GM12878 (cell line): ENCODE measurements at regions of chr4 and their contacts with region 1.

Region 1: GRCh38 chr4:86593688-86594558 is at the start of gene PTPN13:
- DNase-seq: peak; percentile 84
- ATAC-seq: peak; percentile 87
- H3K4me3 ChIP-seq: peak within 1 kb of the TSS; percentile 48
- H3K27ac ChIP-seq: no peak within 1 kb of the TSS
- H3K4me1 ChIP-seq: no peaks in the 10 kb centered on the region
- H3K27me3 ChIP-seq: peaks cover 0 to 5% of the 10 kb centered on the region in 2 experiments; a peak in 1 of 4 replicates
- CTCF ChIP-seq: peak in 2 of 3 experiments; percentile 7 to 39; a peak in 1 of 6 replicates
- EP300 ChIP-seq: no peak
- POLR2A ChIP-seq: peak; percentile 79
- RAD21 ChIP-seq: peak; percentile 21; the same call in 1 of the 2 replicates
- polyA plus RNA-seq, gene PTPN13: 8.5 to 9.3 TPM

Region 2: GRCh38 chr4:86557526-86557925 is 36.4 kb before region 1 on chr4:
- CTCF ChIA-PET with region 1: interaction called, 4 read pairs
- POLR2A ChIA-PET with region 1: interaction called, 6 read pairs
- RAD21 ChIA-PET with region 1: interaction called, 11 read pairs
- SMC1A ChIA-PET with region 1: interaction called, 3 read pairs
- in situ Hi-C with region 1: no loop called
- intact Hi-C with region 1: loop called (anchors 1 kb)
- DNase-seq: no peak
- ATAC-seq: peak; percentile 88
- H3K4me3 ChIP-seq: no peak overlapping the region
- H3K27ac ChIP-seq: peak overlapping the region; percentile 69; the same call in 1 of the 2 replicates
- H3K4me1 ChIP-seq: peaks cover 7% of the 10 kb centered on the region; the same call in 1 of the 2 replicates
- H3K27me3 ChIP-seq: no peaks in the 10 kb centered on the region; a peak in 1 of 4 replicates
- CTCF ChIP-seq: no peak
- EP300 ChIP-seq: no peak
- POLR2A ChIP-seq: no peak
- RAD21 ChIP-seq: no peak

Region 3: GRCh38 chr4:86608757-86609375 is 14.9 kb after region 1 on chr4:
- CTCF ChIA-PET with region 1: interaction called, 13 read pairs
- POLR2A ChIA-PET with region 1: interaction called, 30 read pairs
- RAD21 ChIA-PET with region 1: interaction called, 49 read pairs
- SMC1A ChIA-PET with region 1: interaction called, 69 read pairs
- in situ Hi-C with region 1: no loop called
- intact Hi-C with region 1: no loop called
- DNase-seq: no peak
- ATAC-seq: no peak
- H3K4me3 ChIP-seq: no peak overlapping the region
- H3K27ac ChIP-seq: no peak overlapping the region
- H3K4me1 ChIP-seq: no peaks in the 10 kb centered on the region
- H3K27me3 ChIP-seq: 0 out of 4 replicates have a peak, but pooled peaks cover 0 to 2% of the 10 kb centered on the region in 2 experiments
- CTCF ChIP-seq: no peak
- EP300 ChIP-seq: no peak
- POLR2A ChIP-seq: no peak
- RAD21 ChIP-seq: no peak

Region 4: GRCh38 chr4:86626066-86626465 is 32.1 kb after region 1 on chr4:
- CTCF ChIA-PET with region 1: interaction called, 7 read pairs
- POLR2A ChIA-PET with region 1: interaction called, 4 read pairs
- RAD21 ChIA-PET with region 1: interaction called, 16 read pairs
- SMC1A ChIA-PET with region 1: interaction called, 71 read pairs
- in situ Hi-C with region 1: no loop called
- intact Hi-C with region 1: no loop called
- DNase-seq: no peak
- ATAC-seq: no peak
- H3K4me3 ChIP-seq: no peak overlapping the region
- H3K27ac ChIP-seq: no peak overlapping the region
- H3K4me1 ChIP-seq: no peaks in the 10 kb centered on the region
- H3K27me3 ChIP-seq: no peaks in the 10 kb centered on the region
- CTCF ChIP-seq: no peak
- EP300 ChIP-seq: no peak
- POLR2A ChIP-seq: no peak
- RAD21 ChIP-seq: no peak

Region 5: GRCh38 chr4:86640469-86640868 is 46.5 kb after region 1 on chr4:
- CTCF ChIA-PET with region 1: interaction called, 7 read pairs
- POLR2A ChIA-PET with region 1: interaction called, 10 read pairs
- RAD21 ChIA-PET with region 1: interaction called, 47 read pairs
- SMC1A ChIA-PET with region 1: interaction called, 23 read pairs
- in situ Hi-C with region 1: no loop called
- intact Hi-C with region 1: no loop called
- DNase-seq: no peak
- ATAC-seq: peak; percentile 62
- H3K4me3 ChIP-seq: no peak overlapping the region
- H3K27ac ChIP-seq: no peak overlapping the region
- H3K4me1 ChIP-seq: no peaks in the 10 kb centered on the region
- H3K27me3 ChIP-seq: no peaks in the 10 kb centered on the region
- CTCF ChIP-seq: no peak
- EP300 ChIP-seq: no peak
- POLR2A ChIP-seq: no peak
- RAD21 ChIP-seq: no peak

Region 6: DNA sequence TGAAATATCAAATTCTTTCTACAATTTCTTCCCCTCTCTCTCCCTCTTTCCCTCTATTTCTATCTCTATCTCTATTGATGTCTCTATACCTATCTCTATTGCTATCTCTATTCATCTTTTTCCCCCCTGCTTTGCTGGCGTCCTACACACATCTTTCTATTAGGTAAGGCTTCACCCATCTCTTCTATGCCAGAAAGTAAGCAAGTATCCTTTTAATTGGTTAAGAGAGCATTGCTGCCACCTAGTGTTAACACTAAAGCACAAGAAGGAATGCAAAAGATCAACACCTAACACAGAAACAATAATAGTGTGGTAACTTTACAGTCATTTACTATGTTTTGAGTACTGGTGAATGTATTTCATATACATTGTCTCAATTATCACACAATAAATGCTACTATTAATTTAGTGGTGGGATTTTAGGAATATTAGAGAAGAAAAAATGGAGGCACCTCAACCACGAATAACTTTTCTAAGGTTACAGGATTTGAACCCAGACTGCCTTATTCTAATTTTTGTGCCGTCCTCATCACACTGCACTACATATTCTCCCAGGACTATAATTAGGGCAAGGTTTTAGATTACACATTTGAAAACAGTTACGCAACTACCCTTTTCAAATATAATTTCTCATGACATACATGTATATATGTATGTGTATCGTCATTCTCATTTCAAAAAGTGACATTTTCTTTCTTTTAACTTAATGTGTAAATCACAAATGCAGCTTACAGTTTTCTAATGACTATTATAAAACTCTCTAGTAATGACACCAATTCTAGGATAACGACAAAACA is 302.0 kb after region 1 on chr4:
- CTCF ChIA-PET with region 1: interaction called, 8 read pairs
- POLR2A ChIA-PET with region 1: interaction called, 3 read pairs
- RAD21 ChIA-PET with region 1: interaction called, 12 read pairs
- SMC1A ChIA-PET with region 1: interaction called, 3 read pairs
- in situ Hi-C with region 1: no loop called
- intact Hi-C with region 1: loop called (anchors 2 kb)
- DNase-seq: no peak
- ATAC-seq: peak; percentile 65
- H3K4me3 ChIP-seq: no peak overlapping the region
- H3K27ac ChIP-seq: no peak overlapping the region
- H3K4me1 ChIP-seq: no peaks in the 10 kb centered on the region
- H3K27me3 ChIP-seq: no peaks in the 10 kb centered on the region
- CTCF ChIP-seq: peak; percentile 52 to 80 (median 66)
- EP300 ChIP-seq: no peak
- POLR2A ChIP-seq: no peak
- RAD21 ChIP-seq: peak; percentile 97

Region 7: GRCh38 chr4:86927843-86928395 is 334.0 kb after region 1 on chr4:
- CTCF ChIA-PET with region 1: no interaction called
- POLR2A ChIA-PET with region 1: no interaction called
- RAD21 ChIA-PET with region 1: no interaction called
- SMC1A ChIA-PET with region 1: no interaction called
- in situ Hi-C with region 1: no loop called
- intact Hi-C with region 1: no loop called
- DNase-seq: no peak
- ATAC-seq: peak; percentile 12; the same call in 2 of the 3 replicates
- H3K4me3 ChIP-seq: no peak overlapping the region
- H3K27ac ChIP-seq: no peak overlapping the region; the same call in 1 of the 2 replicates
- H3K4me1 ChIP-seq: peaks cover 15% of the 10 kb centered on the region
- H3K27me3 ChIP-seq: no peaks in the 10 kb centered on the region
- CTCF ChIP-seq: no peak
- EP300 ChIP-seq: no peak
- POLR2A ChIP-seq: no peak
- RAD21 ChIP-seq: no peak